ENCODE measurements at regions of chr19 and their contacts with region 1.

Region 1: DNA sequence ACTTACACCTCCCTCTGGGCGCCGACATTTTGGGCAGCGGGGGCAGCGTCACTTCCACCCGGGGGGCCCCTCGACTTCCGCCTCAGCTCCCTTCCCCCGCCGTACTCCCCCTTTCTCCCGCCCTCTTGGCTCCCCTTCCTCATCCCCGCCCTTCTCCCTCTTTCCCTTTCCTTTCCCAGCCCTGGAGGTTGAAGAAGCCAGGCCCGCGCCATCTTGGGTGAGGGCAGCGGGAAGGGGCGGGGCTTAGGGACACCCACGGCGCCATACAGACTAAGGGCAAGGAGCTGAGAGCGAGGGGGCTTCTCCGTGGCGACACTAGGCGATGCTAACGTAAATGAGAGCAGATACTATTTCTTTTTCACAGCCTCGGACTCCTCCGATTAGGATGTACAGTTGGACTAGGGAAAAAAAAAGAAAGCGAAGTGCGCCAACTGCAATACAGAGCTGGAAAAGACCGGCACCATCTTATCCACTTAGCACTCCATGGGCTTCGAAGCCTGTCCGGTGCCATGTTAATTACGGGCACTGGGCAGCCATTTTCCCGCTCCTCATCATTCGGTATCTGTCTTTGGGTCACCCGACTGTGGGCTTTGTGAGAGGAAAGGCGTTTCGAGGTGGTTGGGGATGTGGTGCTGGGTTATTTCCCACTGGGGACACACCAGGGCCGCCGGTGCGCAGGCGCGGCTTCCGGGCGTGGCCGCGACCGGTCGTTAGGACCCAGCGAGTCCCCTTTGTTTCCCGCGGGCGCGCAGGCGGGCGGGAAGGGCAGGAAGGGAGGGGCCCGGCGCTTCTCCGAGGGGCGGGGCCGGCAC is at the start of gene FIZ1:
- DNase-seq: peak; percentile 99
- ATAC-seq: peak; percentile 75 to 81
- H3K4me3 ChIP-seq: peak within 1 kb of the TSS; percentile 75 to 95 (median 86)
- H3K27ac ChIP-seq: peak within 1 kb of the TSS; percentile 97 to 100 (median 98)
- H3K4me1 ChIP-seq: peaks cover 16 to 28% of the 10 kb centered on the region in 2 donors
- H3K27me3 ChIP-seq: no peaks in the 10 kb centered on the region
- CTCF ChIP-seq: peak in 1 of 5 experiments; percentile 22
- POLR2A ChIP-seq: peak in 1 of 2 donors; percentile 28
- total RNA-seq, gene FIZ1: 6.8 to 11.2 (median 7.4) TPM

Region 2: DNA sequence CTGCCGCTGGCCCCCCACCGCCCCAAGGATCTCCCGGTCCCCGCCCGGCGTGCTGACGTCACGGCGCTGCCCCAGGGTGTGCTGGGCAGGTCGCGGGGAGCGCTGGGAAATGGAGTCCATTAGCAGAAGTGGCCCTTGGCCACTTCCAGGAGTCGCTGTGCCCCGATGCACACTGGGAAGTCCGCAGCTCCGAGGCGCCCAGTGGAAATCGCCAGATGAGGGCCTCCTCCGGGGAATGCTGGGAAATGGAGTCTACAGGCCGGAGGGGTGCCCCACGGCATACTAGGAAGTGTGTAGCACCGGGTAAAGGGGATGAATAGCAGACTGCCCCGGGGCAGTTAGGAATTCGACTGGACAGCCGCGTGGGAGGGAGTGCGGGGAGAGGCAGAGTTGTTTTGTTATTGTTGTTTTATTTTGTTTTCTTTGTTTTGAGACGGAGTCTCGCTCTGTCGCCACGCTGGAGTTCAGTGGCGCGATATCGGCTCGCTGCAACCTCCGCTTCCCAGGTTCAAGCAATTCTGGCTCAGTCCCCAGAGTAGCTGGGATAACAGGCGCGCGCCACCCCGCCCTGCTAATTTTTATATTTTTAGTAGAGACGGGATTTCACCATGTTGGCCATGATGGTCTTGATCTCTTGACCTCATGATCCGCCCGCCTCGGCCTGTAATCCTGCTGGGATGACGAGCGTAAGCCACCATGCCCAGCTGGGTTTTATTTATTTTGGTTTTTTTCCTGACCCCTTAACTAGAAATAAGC is 481.9 kb before region 1 on chr19 and contains the start of gene PPP1R12C:
- in situ Hi-C with region 1: no loop called
- intact Hi-C with region 1: loop called (anchors 1 kb)
- DNase-seq: peak; percentile 98
- ATAC-seq: peak; percentile 81 to 90
- H3K4me3 ChIP-seq: peak within 1 kb of the TSS; percentile 80 to 90 (median 85)
- H3K27ac ChIP-seq: peak within 1 kb of the TSS; percentile 74 to 88 (median 86)
- H3K4me1 ChIP-seq: peaks cover 35 to 44% of the 10 kb centered on the region in 2 donors
- H3K27me3 ChIP-seq: no peaks in the 10 kb centered on the region
- CTCF ChIP-seq: peak in 1 of 5 experiments; percentile 25
- POLR2A ChIP-seq: peak; percentile 29 to 36
- total RNA-seq, gene PPP1R12C: 22.6 to 28.2 (median 26.2) TPM

Region 3: GRCh38 chr19:55339048-55339888 is 260.4 kb before region 1 on chr19 and contains the start of gene KMT5C:
- in situ Hi-C with region 1: no loop called
- intact Hi-C with region 1: loop called (anchors 2 kb)
- DNase-seq: peak; percentile 100
- ATAC-seq: peak; percentile 94 to 95
- H3K4me3 ChIP-seq: peak within 1 kb of the TSS; percentile 65 to 82 (median 75)
- H3K27ac ChIP-seq: peak within 1 kb of the TSS; percentile 83 to 97 (median 91)
- H3K4me1 ChIP-seq: peaks cover 12 to 22% of the 10 kb centered on the region in 2 donors
- H3K27me3 ChIP-seq: peaks cover 0 to 10% (median 7%) of the 10 kb centered on the region in 3 donors
- CTCF ChIP-seq: peak in 4 of 5 experiments; percentile 38 to 65 (median 52)
- POLR2A ChIP-seq: peak in 1 of 2 donors; percentile 85
- total RNA-seq, gene KMT5C: 2.5 to 5.4 (median 4.5) TPM

Region 4: GRCh38 chr19:55516878-55517620 is 82.6 kb before region 1 on chr19:
- in situ Hi-C with region 1: no loop called
- intact Hi-C with region 1: loop called (anchors 2 kb)
- DNase-seq: peak; percentile 91 to 96
- ATAC-seq: peak; percentile 71 to 88
- H3K4me3 ChIP-seq: peak overlapping the region; percentile 58 to 74 (median 63)
- H3K27ac ChIP-seq: peak overlapping the region; percentile 94 to 99 (median 96)
- H3K4me1 ChIP-seq: peaks cover 19 to 22% of the 10 kb centered on the region in 2 donors
- H3K27me3 ChIP-seq: no peaks in the 10 kb centered on the region
- CTCF ChIP-seq: peak; percentile 87 to 96 (median 94)
- POLR2A ChIP-seq: peak; percentile 72 to 80

Region 5: DNA sequence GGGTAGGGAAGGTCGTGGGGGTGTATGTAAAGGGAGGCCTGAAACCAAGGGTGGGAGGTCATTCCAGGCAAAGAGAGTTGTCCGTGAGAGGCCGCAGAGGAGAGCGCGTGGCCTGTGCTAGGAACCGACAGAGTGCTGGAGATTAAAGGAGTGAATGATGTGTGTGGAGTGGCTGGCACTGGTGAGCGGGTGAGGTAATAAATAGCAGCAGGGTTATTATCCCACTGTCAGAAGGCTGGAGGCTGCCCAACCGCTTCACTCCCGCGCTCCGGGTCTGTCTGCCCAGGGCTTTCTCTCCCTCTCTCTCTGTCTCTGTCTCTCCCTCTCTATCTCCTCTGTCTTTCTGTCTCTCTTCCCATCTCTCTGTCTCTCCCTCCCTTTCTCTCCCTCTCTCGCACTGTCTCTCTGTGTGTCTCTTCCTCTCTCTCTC is 36.4 kb before region 1 on chr19:
- in situ Hi-C with region 1: no loop called
- intact Hi-C with region 1: loop called (anchors 5 kb)
- DNase-seq: peak; percentile 64 to 83
- ATAC-seq: peak; percentile 95 to 97
- H3K4me3 ChIP-seq: peak overlapping the region in 1 of 4 donors; percentile 16
- H3K27ac ChIP-seq: peak overlapping the region; percentile 79 to 93 (median 84)
- H3K4me1 ChIP-seq: peaks cover 9 to 14% of the 10 kb centered on the region in 2 donors
- H3K27me3 ChIP-seq: no peaks in the 10 kb centered on the region
- CTCF ChIP-seq: no peak
- POLR2A ChIP-seq: peak; percentile 79

Region 6: GRCh38 chr19:55624109-55625003 is 24.7 kb after region 1 on chr19 and contains the start of gene ZNF784:
- in situ Hi-C with region 1: no loop called
- intact Hi-C with region 1: loop called (anchors 1 kb)
- DNase-seq: peak; percentile 89 to 91
- ATAC-seq: peak; percentile 76 to 83
- H3K4me3 ChIP-seq: peak within 1 kb of the TSS; percentile 71 to 77 (median 74)
- H3K27ac ChIP-seq: peak within 1 kb of the TSS; percentile 97 to 99 (median 98)
- H3K4me1 ChIP-seq: peaks cover 30 to 37% of the 10 kb centered on the region in 2 donors
- H3K27me3 ChIP-seq: no peaks in the 10 kb centered on the region
- CTCF ChIP-seq: no peak
- POLR2A ChIP-seq: peak; percentile 38 to 49
- total RNA-seq, gene ZNF784: 6.0 to 10.0 (median 8.2) TPM

Region 7: DNA sequence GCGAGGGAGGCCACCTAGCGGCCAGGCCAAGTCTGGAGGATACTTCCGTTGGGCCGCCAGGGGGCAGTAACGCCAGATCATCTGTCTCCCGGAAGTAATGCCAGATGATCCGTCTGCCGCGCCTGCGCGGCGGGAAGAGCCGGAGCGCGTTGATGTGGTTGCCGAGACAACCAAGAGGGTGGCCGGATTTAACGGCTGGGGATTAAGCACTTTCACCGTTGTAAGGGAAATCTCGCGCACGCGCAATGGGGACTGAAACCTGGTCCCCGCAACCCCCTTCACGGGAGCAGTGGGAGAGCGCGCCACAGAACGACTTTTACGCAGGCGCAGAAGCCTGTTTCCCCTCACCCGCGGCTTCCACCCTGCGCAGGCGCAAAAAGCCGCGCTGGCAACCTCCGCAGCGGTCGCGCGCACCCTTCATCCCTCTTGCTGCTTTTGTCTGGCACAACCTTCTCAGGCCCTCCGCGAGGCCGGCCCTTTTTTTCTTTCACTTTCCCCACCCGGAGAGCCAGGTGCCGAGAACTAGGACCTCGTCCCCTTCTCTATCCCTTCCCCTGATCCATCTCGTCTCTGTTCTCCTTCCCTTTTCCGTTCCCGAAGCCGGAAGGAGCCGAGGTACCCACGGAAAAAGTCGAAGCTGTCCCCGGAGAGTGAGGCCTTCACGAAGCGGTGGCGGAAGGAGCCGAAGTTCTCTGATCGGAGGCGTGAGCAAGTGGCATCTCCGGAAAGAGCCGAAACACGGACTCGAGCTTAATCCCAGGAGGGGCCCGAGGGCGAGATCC is 54.3 kb after region 1 on chr19:
- in situ Hi-C with region 1: no loop called
- intact Hi-C with region 1: loop called (anchors 1 kb)
- DNase-seq: peak; percentile 99 to 100
- ATAC-seq: peak; percentile 76 to 77
- H3K4me3 ChIP-seq: peak overlapping the region; percentile 75 to 98 (median 90)
- H3K27ac ChIP-seq: peak overlapping the region; percentile 98 to 100 (median 99)
- H3K4me1 ChIP-seq: peaks cover 34 to 44% of the 10 kb centered on the region in 2 donors
- H3K27me3 ChIP-seq: no peaks in the 10 kb centered on the region
- CTCF ChIP-seq: peak; percentile 95 to 100 (median 99)
- POLR2A ChIP-seq: peak; percentile 88 to 91